Activated CD4-positive, alpha-beta memory T cell treated with anti-CD3 and anti-CD28 coated beads, Interleukin-2, amount 10 ng/mL, durations not matched to agents 7 days and 5 days (primary cell): ENCODE measurements at regions of chr11 and their contacts with region 1.

Region 1: DNA sequence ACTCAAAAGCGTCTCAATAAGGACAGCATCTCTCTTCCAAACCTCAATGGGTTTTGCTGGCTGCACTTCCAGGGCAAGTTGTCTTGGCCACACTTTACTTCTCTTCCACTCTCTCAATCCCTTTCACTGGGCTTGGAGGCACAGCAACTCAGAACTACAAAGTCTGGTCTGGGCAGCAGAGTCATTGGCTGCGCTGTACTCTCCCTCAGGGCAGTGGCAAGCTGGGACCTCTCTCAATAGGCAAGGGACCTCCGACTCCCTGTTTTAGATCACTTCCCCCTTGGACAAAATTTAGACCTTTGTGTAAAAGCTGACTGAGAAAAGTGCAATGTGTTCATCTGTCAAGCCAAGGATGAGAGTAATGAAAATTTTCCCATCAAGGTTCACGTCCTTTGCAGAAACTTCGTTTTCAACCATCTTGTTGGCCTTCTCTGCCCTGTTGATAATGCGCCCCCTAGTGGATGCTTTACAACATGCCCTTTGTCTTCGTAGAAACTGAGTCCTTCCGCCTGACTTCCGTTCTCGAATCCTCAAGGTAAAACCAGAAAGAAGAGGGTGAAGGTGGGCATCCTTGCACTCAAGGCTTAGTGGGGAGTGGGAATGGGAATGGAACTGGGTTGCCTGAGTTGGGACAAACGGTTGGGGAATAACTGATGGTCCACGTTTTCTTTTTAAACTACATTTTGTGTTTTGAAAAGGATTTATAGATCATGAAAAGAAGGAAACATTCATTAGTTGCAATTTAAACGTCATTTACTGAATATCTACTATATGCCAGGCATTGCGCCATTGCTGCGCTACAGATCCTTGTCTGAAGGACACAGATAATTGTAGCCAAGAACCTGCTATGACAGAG is 99.1 kb downstream of the CD44 start:
- DNase-seq: peak; percentile 59
- H3K4me3 Mint-ChIP-seq: no peak overlapping the region
- H3K27ac Mint-ChIP-seq: peak overlapping the region; percentile 36
- H3K4me1 Mint-ChIP-seq: peaks cover 81% of the 10 kb centered on the region
- H3K27me3 Mint-ChIP-seq: peaks cover 2% of the 10 kb centered on the region

Region 2: GRCh38 chr11:35178873-35179272 is 59.2 kb before region 1 on chr11:
- CTCF ChIA-PET with region 1: interaction called, 6 read pairs
- POLR2A ChIA-PET with region 1: interaction called, 24 read pairs
- DNase-seq: no peak
- H3K4me3 Mint-ChIP-seq: no peak overlapping the region
- H3K27ac Mint-ChIP-seq: peak overlapping the region; percentile 31
- H3K4me1 Mint-ChIP-seq: peaks cover 88% of the 10 kb centered on the region
- H3K27me3 Mint-ChIP-seq: no peaks in the 10 kb centered on the region